MCF 10A (cell line): ENCODE measurements at regions of chr17 and their contacts with region 1.

Region 1: GRCh38 chr17:18203308-18203707 is 19.7 kb downstream of the ALKBH5 start:
- DNase-seq: no peak
- H3K4me3 Mint-ChIP-seq: no peak overlapping the region
- H3K27ac Mint-ChIP-seq: no peak overlapping the region
- H3K4me1 Mint-ChIP-seq: peaks cover 6% of the 10 kb centered on the region
- H3K27me3 Mint-ChIP-seq: no peaks in the 10 kb centered on the region
- CTCF ChIP-seq: no peak

Region 2: DNA sequence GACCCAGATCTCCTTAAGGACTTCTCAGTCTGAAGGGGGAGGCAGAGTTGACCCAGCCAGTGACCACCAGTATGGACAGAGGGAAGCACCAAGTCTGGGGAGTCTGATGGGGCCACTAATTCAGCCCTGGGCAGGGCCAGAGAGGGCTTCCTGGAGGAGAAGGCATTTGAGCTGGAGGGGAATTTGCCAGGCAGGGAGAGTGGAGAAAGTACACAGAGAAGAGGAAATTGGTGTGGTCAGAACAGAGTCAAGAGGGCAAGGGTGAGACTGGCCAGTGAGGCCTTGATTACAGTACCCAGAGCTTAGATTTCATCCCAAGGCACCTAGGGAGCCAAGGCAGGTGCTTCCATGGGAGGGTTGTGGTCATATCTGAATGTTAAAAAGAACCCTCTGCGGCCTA is 58.5 kb before region 1 on chr17:
- CTCF ChIA-PET with region 1: no interaction called
- POLR2A ChIA-PET with region 1: no interaction called
- intact Hi-C with region 1: no loop called
- DNase-seq: no peak
- H3K4me3 Mint-ChIP-seq: no peak overlapping the region
- H3K27ac Mint-ChIP-seq: no peak overlapping the region
- H3K4me1 Mint-ChIP-seq: no peaks in the 10 kb centered on the region
- H3K27me3 Mint-ChIP-seq: no peaks in the 10 kb centered on the region
- CTCF ChIP-seq: no peak

Region 3: GRCh38 chr17:18191967-18192366 is 11.3 kb before region 1 on chr17:
- CTCF ChIA-PET with region 1: interaction called, 13 read pairs
- POLR2A ChIA-PET with region 1: interaction called, 3 read pairs
- intact Hi-C with region 1: no loop called
- DNase-seq: no peak
- H3K4me3 Mint-ChIP-seq: no peak overlapping the region
- H3K27ac Mint-ChIP-seq: no peak overlapping the region
- H3K4me1 Mint-ChIP-seq: peaks cover 21% of the 10 kb centered on the region
- H3K27me3 Mint-ChIP-seq: no peaks in the 10 kb centered on the region
- CTCF ChIP-seq: peak; percentile 8

Region 4: DNA sequence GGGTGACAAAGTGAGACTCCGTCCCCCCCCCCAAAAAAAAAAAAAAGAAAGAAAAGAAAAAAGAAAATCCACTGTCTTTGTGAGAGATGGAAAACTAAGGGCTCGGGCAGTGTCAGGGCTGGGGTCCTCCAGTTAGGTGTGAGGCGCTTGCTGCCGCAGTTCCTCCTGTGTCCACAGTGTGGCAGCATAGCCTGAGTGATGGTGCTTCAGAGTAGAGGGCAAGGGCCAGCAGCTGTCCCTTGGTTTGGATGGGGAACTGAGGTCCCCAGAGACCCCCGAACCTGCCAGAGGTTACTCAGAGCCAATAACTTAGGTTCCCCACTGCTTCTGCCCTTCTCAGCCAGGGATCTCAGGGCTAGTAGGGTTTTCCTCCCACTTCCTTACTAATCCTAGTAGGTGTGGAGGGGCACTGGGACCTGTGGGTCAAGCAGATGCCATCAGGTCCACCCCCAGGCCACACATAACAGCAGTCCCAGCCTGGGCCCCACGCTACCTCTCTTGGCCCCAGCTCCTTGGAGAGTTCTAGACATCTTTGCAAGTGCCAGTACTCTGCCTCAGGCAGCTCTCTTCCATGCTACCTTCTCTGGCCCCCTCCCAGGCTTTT is 14.2 kb after region 1 on chr17:
- CTCF ChIA-PET with region 1: interaction called, 17 read pairs
- POLR2A ChIA-PET with region 1: interaction called, 3 read pairs
- intact Hi-C with region 1: no loop called
- DNase-seq: peak; percentile 72
- H3K4me3 Mint-ChIP-seq: no peak overlapping the region
- H3K27ac Mint-ChIP-seq: no peak overlapping the region
- H3K4me1 Mint-ChIP-seq: peaks cover 4% of the 10 kb centered on the region
- H3K27me3 Mint-ChIP-seq: no peaks in the 10 kb centered on the region
- CTCF ChIP-seq: peak; percentile 88